Endothelial cell of umbilical vein (primary cell): ENCODE measurements at regions of chr4 and their contacts with region 1.

Region 1: DNA sequence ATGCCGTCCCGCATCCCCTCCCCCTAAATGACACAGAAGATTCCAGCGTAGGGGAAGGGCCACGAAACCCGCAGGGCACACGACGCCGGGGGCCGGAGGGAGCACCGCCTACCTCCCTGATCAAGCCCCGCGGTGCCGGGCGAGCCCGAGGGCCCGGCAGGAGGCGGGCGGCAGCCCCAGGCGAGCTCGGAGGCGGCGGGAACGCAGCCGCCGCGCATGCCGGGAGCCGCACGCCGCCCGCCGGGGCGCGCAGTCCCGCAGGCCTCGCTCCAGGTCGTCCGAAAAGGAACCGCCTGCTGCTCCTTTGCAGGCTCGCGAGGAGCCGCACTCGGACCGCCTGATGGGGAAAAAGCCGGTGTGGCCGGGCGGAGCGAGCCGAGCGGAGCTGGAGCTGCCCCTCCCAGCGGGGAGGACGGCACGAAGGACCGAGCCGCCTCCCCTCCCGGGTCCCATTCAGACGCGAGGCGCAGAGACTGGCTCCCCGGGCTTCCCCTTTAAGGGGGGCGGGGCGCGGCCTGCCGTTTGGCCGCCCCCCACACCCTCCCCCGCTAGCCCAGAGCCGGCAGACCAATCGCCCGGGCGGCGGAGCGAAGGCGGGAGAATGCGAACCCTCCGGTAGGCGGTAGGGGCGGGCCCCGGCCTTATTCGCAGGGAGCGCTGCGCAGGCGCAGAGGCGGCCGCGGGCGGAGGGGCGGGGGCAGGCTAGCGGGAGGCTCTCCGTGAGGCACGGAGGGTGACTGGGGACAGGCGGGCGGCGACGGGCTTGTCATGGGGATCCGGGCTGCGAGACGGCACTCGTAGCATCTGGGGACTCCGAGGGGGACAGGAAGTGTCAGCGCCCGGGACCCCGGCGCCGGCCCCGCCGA is 561 bp upstream of the ING2 start:
- DNase-seq: peak; percentile 98
- H3K4me3 ChIP-seq: peak overlapping the region; percentile 75 to 92 (median 76)
- H3K27ac ChIP-seq: peak overlapping the region; percentile 86
- H3K4me1 ChIP-seq: peaks cover 18% of the 10 kb centered on the region
- H3K27me3 ChIP-seq: no peaks in the 10 kb centered on the region
- CTCF ChIP-seq: peak; percentile 1 to 4
- POLR2A ChIP-seq: peak; percentile 58

Region 2: GRCh38 chr4:182604161-182604622 is 900.1 kb before region 1 on chr4:
- CTCF ChIA-PET with region 1: no interaction called
- POLR2A ChIA-PET with region 1: no interaction called
- dilution Hi-C with region 1: no loop called
- intact Hi-C with region 1: loop called (anchors 10 kb)
- DNase-seq: peak; percentile 88
- H3K4me3 ChIP-seq: peak overlapping the region in 1 of 3 experiments; percentile 43
- H3K27ac ChIP-seq: peak overlapping the region; percentile 99
- H3K4me1 ChIP-seq: peaks cover 30% of the 10 kb centered on the region
- H3K27me3 ChIP-seq: no peaks in the 10 kb centered on the region
- CTCF ChIP-seq: no peak
- POLR2A ChIP-seq: peak; percentile 61

Region 3: DNA sequence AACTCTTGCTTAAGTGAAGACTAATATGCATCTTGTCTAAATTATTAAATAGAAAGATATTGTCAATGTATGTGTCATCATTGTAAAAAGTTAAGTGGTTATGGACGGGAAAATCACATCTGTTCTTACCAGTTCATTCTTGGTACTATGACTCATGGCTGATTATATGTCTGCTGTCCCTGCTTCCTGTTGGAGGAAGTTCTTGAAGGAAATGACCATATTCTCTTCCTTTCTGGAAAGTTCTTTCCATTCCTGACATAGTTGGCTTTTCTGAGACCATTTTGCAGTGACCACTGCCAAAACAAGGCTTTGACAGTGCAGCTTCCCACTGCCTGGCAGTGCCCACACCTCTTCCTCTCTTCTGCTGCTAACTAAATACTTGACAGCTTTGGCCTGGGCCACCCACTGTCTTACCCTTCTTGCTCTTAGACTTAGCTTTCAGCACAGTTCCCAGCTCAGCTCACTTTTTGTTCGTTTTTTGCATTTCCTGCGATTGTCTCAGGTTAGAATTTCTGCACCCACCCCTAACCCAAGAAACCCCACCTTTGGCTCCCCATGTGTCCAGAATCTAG is 168.8 kb before region 1 on chr4:
- CTCF ChIA-PET with region 1: no interaction called
- POLR2A ChIA-PET with region 1: no interaction called
- dilution Hi-C with region 1: no loop called
- intact Hi-C with region 1: loop called (anchors 1 kb)
- DNase-seq: peak; percentile 91
- H3K4me3 ChIP-seq: no peak overlapping the region
- H3K27ac ChIP-seq: peak overlapping the region; percentile 96
- H3K4me1 ChIP-seq: peaks cover 27% of the 10 kb centered on the region
- H3K27me3 ChIP-seq: no peaks in the 10 kb centered on the region
- CTCF ChIP-seq: no peak
- POLR2A ChIP-seq: peak; percentile 63

Region 4: DNA sequence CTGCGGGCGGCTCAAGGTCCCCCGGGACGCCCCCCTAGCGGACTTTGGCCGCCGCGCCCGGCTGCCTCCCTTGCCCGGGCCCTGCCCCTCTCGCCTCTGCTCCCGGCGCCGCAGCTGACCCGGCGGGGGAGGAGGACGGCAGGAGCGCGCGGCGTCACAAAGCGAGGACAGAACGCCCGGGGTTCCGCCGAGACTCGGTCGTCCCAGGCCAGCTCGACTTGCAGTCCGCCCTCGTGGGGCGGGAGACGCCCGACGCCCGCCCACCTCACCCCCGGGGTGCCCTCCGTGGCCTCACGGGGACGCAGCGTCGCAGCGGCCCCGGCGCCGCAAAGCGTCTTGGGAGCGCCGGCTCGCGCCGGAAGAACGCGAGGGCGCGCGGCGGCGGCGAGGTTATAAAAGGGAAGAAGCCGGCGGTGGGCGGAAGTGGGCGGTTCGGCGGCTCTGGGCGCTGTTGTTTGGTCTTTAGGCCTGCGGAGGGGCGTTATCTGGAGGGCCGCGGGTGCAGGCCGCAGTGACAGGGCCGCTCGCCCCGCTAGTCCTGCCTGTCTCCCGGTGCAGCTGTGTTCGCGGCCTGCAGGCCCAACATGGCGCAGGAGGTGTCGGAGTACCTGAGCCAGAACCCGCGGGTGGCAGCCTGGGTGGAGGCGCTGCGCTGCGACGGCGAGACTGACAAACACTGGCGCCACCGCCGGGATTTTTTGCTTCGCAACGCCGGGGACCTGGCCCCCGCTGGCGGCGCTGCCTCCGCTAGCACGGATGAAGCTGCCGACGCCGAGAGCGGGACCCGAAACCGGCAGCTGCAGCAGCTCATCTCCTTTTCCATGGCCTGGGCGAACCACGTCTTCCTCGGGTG is 59.9 kb before region 1 on chr4 and contains the start of gene CDKN2AIP:
- CTCF ChIA-PET with region 1: interaction called, 3 read pairs
- POLR2A ChIA-PET with region 1: interaction called, 4 read pairs
- dilution Hi-C with region 1: no loop called
- intact Hi-C with region 1: loop called (anchors 1 kb)
- DNase-seq: peak; percentile 93
- H3K4me3 ChIP-seq: peak within 1 kb of the TSS; percentile 34 to 68 (median 66)
- H3K27ac ChIP-seq: peak within 1 kb of the TSS; percentile 89
- H3K4me1 ChIP-seq: peaks cover 21% of the 10 kb centered on the region
- H3K27me3 ChIP-seq: no peaks in the 10 kb centered on the region
- CTCF ChIP-seq: no peak
- POLR2A ChIP-seq: peak; percentile 85
- total RNA-seq, gene CDKN2AIP: 10.4 and 12.8 TPM in 2 replicates

Region 5: DNA sequence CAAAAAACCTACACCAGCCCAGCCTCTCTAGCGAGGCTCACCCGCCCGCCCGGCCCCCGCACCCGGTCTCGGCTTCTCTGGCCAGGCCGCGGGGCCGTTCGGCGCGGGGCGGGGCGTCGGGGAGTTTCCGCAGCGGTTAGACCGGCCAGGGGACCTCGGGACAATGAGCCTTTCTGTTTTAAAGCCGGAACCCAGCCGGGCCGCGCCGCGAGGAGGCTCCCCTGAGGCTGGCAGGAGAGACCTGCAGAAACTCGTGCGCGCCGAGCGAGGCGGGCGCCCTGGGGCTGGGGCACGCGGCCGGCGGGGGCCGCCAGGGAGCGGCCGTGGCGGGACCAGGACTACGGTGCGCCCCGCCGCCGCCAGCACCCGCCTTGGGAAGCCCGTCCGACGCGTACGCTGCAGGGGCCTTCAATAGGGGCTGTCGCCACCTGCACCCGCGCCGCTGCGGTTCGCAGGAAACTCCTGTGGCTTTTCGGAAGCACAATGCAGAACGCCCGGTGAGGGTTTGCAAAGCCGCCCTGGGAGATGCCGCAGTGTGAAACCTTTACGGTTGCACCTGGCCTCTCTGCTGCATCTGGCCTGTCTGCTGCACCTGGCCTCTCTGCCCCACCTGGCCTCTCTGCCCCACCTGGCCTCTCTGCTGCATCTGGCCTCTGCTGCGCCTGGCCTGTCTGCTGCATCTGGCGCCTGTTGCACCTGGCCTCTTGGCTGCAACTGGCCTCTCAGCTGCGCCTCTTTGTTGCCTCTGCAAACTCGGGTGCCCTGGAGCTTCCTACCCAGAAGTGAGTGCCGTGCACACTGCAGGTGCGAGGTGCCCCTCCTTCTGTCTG is 218.6 kb after region 1 on chr4:
- CTCF ChIA-PET with region 1: no interaction called
- POLR2A ChIA-PET with region 1: no interaction called
- dilution Hi-C with region 1: no loop called
- intact Hi-C with region 1: loop called (anchors 1 kb)
- DNase-seq: peak; percentile 33
- H3K4me3 ChIP-seq: peak overlapping the region; percentile 34 to 44 (median 35)
- H3K27ac ChIP-seq: no peak overlapping the region
- H3K4me1 ChIP-seq: peaks cover 2% of the 10 kb centered on the region
- H3K27me3 ChIP-seq: no peaks in the 10 kb centered on the region
- CTCF ChIP-seq: no peak
- POLR2A ChIP-seq: no peak

Region 6: DNA sequence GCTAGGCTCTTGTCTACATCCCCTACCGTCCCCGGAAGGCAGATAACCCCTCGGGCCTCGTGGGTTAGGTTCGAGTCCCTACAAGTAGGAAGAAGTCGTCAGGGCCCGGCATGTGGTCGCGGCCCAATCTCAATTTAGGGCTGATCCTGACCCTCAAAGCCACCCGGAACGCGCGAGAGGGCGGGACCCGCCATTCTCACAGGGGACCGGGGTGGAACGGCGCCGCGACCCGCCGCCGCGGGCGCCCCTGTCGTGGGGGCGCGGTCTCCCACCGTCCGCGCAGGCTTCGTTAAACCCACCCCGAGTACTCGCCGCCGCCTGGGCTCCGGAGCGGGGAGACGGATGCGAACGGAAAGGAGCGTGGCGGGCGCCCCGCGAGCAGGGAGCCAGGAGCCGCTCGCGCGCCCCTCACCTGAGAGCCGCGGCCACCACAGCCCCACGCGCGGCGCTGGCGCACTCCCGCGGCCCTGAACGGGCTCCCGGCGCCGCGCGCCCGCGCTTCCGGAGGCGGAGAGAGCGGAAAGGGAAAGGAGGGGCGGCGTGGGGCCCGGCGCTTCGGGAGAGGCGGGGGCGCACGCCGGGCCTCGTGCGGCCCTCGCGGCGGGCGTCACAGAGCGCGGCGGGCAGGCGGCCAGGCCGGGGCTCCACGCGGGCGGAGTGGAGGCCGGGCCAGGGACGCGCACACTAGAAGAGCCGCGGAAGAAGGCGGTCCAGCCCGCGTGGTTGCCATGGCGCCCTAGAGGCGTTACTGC is 1699.4 kb after region 1 on chr4 and contains the start of gene CFAP97:
- CTCF ChIA-PET with region 1: no interaction called
- POLR2A ChIA-PET with region 1: no interaction called
- dilution Hi-C with region 1: no loop called
- intact Hi-C with region 1: loop called (anchors 10 kb)
- DNase-seq: peak; percentile 90
- H3K4me3 ChIP-seq: peak within 1 kb of the TSS; percentile 60 to 89 (median 64)
- H3K27ac ChIP-seq: peak within 1 kb of the TSS; percentile 79
- H3K4me1 ChIP-seq: peaks cover 34% of the 10 kb centered on the region
- H3K27me3 ChIP-seq: no peaks in the 10 kb centered on the region
- CTCF ChIP-seq: no peak
- POLR2A ChIP-seq: peak; percentile 43
- total RNA-seq, gene CFAP97: 17.6 and 22.4 TPM in 2 replicates